B cell (primary cell): ENCODE measurements at regions of chr12 and their contacts with region 1.

Region 1: GRCh38 chr12:106357549-106358395 is at the start of gene POLR3B:
- DNase-seq: peak; percentile 98
- ATAC-seq: peak; percentile 90
- H3K4me3 ChIP-seq: peak within 1 kb of the TSS; percentile 59 to 93 (median 85)
- H3K4me3 Mint-ChIP-seq: peak within 1 kb of the TSS; percentile 98
- H3K27ac ChIP-seq: peak within 1 kb of the TSS; percentile 67 to 80
- H3K27ac Mint-ChIP-seq: peak within 1 kb of the TSS; percentile 97
- H3K4me1 ChIP-seq: peaks cover 11 to 12% of the 10 kb centered on the region in 2 donors
- H3K4me1 Mint-ChIP-seq: peaks cover 16% of the 10 kb centered on the region
- H3K27me3 ChIP-seq: no peaks in the 10 kb centered on the region
- H3K27me3 Mint-ChIP-seq: peaks cover 2% of the 10 kb centered on the region
- CTCF ChIP-seq: peak; percentile 84
- total RNA-seq, gene POLR3B: 5.9 and 9.7 TPM in 2 replicates

Region 2: GRCh38 chr12:105235732-105236476 is 1121.9 kb before region 1 on chr12 and contains the start of gene APPL2:
- CTCF ChIA-PET with region 1: interaction called, 3 read pairs
- POLR2A ChIA-PET with region 1: no interaction called
- intact Hi-C with region 1: loop called (anchors 10 kb)
- DNase-seq: peak; percentile 92
- ATAC-seq: peak; percentile 81
- H3K4me3 ChIP-seq: peak within 1 kb of the TSS; percentile 51 to 90 (median 71)
- H3K4me3 Mint-ChIP-seq: peak within 1 kb of the TSS; percentile 95
- H3K27ac ChIP-seq: peak within 1 kb of the TSS; percentile 70 to 95
- H3K27ac Mint-ChIP-seq: peak within 1 kb of the TSS; percentile 94
- H3K4me1 ChIP-seq: peaks cover 44 to 49% of the 10 kb centered on the region in 2 donors
- H3K4me1 Mint-ChIP-seq: peaks cover 38% of the 10 kb centered on the region
- H3K27me3 ChIP-seq: no peaks in the 10 kb centered on the region
- H3K27me3 Mint-ChIP-seq: no peaks in the 10 kb centered on the region
- CTCF ChIP-seq: peak; percentile 66
- total RNA-seq, gene APPL2: 57.7 and 58.3 TPM in 2 replicates

Region 3: GRCh38 chr12:105906545-105906944 is 451.2 kb before region 1 on chr12:
- CTCF ChIA-PET with region 1: no interaction called
- POLR2A ChIA-PET with region 1: no interaction called
- intact Hi-C with region 1: no loop called
- DNase-seq: no peak
- ATAC-seq: no peak
- H3K4me3 ChIP-seq: no peak overlapping the region
- H3K4me3 Mint-ChIP-seq: no peak overlapping the region
- H3K27ac ChIP-seq: no peak overlapping the region
- H3K27ac Mint-ChIP-seq: no peak overlapping the region
- H3K4me1 ChIP-seq: no peaks in the 10 kb centered on the region
- H3K4me1 Mint-ChIP-seq: no peaks in the 10 kb centered on the region
- H3K27me3 ChIP-seq: no peaks in the 10 kb centered on the region
- H3K27me3 Mint-ChIP-seq: peaks cover 4% of the 10 kb centered on the region
- CTCF ChIP-seq: no peak

Region 4: DNA sequence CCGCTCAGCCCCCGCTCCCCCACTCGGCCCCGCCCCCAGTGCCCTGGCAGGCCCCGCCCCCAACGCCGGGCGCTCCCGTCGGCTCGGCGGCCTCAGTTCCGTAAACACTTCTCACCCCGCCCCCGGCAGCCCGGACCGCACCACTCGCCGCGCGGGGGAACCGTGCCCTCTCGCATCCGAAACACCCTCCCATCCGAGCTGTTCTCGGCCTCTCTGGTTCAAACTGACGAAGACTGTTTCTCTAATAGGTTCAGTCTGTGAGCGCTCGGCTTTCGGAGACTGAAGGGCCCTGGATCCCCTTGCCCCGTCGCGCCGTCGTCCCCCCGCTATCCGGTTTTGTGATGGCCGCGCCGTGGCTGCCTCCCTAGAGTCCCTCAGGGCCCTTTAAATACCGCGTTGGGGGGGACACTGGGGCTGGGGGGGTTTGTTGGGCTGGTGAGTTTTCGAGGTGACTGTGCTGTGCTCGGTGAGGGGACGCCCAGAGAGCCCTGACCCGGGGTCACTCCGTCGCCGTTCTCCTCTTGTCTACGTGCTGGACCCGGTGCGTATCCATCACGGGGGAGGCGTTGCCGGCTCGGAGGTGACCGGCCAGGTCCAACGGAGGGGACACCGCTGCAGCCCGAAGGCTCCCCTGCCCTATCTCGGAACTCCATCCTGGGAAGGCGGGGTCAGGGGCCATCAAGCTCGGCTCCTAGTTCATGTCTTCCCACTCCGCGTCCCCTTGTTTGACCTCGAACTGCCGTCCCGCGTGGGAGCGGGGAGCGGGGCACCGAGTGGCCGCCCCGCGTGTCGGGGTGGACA is 55.2 kb before region 1 on chr12 and contains the start of gene TCP11L2:
- CTCF ChIA-PET with region 1: interaction called, 9 read pairs
- POLR2A ChIA-PET with region 1: interaction called, 20 read pairs
- intact Hi-C with region 1: loop called (anchors 1 kb)
- DNase-seq: peak; percentile 96
- ATAC-seq: peak; percentile 58
- H3K4me3 ChIP-seq: peak within 1 kb of the TSS; percentile 84 to 100 (median 99)
- H3K4me3 Mint-ChIP-seq: peak within 1 kb of the TSS; percentile 94
- H3K27ac ChIP-seq: peak within 1 kb of the TSS; percentile 98 to 99
- H3K27ac Mint-ChIP-seq: peak within 1 kb of the TSS; percentile 100
- H3K4me1 ChIP-seq: peaks cover 43 to 48% of the 10 kb centered on the region in 2 donors
- H3K4me1 Mint-ChIP-seq: peaks cover 65% of the 10 kb centered on the region
- H3K27me3 ChIP-seq: no peaks in the 10 kb centered on the region
- H3K27me3 Mint-ChIP-seq: no peaks in the 10 kb centered on the region
- CTCF ChIP-seq: no peak
- total RNA-seq, gene TCP11L2: 306 and 315 TPM in 2 replicates

Region 5: DNA sequence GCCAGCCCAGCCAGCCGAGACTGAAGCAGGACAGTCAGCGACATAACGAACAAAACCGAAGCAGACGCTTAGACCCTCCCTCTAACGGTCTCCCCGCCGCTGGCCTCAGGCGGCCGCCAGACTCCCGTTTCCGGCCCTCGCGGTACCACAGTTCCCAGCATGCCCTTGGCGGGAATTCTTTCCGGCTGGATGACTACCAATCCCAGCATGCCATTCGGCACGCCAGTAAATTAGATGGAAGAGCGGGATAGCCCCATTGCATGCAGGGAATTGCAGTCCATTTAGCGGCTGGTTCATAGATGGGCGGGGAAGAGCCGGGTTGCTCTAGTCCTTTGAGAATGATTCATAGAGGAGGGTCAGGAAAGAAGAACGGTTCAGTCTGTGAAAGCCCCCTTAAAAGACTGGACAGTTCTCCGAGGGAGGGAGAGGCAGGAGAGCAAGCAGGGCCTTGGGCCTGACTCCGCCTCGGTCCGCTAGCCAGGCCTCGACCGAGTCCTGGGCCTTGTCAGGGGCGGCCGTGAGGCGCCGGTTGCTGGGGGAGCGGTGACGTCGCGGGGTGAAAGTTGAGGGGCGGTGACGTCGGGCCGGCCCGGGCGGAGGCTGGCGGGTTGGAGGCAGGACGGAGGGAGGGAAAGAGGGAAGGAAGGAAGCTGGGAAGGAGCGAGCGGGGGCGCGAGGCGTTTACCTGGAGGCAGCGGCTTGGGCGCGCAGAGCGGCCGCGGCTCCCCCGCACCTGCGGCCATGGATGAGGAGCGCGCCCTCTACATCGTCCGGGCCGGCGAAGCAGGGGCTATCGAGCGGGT is 416.4 kb after region 1 on chr12 and contains the start of gene RIC8B:
- CTCF ChIA-PET with region 1: no interaction called
- POLR2A ChIA-PET with region 1: no interaction called
- intact Hi-C with region 1: loop called (anchors 1 kb)
- DNase-seq: peak; percentile 74
- ATAC-seq: peak; percentile 86
- H3K4me3 ChIP-seq: peak within 1 kb of the TSS; percentile 67 to 77 (median 70)
- H3K4me3 Mint-ChIP-seq: peak within 1 kb of the TSS; percentile 96
- H3K27ac ChIP-seq: peak within 1 kb of the TSS in 1 of 2 donors; percentile 69
- H3K27ac Mint-ChIP-seq: peak within 1 kb of the TSS; percentile 88
- H3K4me1 ChIP-seq: peaks cover 16 to 17% of the 10 kb centered on the region in 2 donors
- H3K4me1 Mint-ChIP-seq: peaks cover 27% of the 10 kb centered on the region
- H3K27me3 ChIP-seq: peaks cover 0 to 14% (median 2%) of the 10 kb centered on the region in 4 experiments
- H3K27me3 Mint-ChIP-seq: peaks cover 8% of the 10 kb centered on the region
- CTCF ChIP-seq: no peak
- total RNA-seq, gene RIC8B: 12.7 and 14.8 TPM in 2 replicates

Region 6: DNA sequence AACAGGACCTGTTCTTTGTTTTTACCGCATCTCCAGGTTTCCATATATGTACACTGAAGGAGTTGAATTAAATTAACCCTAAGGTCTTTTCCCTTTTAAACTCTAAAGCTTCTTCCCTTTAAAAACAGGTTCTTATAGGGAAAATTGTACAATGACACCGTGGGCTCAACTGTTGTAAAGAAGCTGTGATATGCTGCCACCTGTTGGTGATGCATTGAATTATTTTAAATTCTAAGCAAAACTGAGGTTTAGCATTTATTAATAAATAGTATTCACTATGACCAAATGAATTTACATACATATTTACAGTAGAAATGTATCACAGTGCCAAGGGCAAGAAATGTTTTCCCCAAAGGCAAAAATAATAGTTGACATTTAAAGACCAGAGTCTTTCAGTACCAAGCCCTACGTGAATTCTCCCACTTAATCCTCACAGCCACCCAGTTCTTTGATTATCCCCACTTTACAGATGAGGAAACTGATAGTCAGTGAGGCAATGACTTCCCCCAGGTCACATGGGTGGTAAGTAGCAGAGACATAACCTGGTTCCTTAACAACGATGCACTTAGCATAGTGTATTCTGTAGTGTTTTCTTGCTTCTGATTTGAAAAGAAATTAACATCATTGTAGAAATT is 562.3 kb after region 1 on chr12:
- CTCF ChIA-PET with region 1: interaction called, 39 read pairs
- POLR2A ChIA-PET with region 1: no interaction called
- intact Hi-C with region 1: loop called (anchors 1 kb)
- DNase-seq: peak; percentile 64
- ATAC-seq: no peak
- H3K4me3 ChIP-seq: no peak overlapping the region
- H3K4me3 Mint-ChIP-seq: no peak overlapping the region
- H3K27ac ChIP-seq: no peak overlapping the region
- H3K27ac Mint-ChIP-seq: no peak overlapping the region
- H3K4me1 ChIP-seq: peaks cover 0 to 18% of the 10 kb centered on the region in 2 donors
- H3K4me1 Mint-ChIP-seq: no peaks in the 10 kb centered on the region
- H3K27me3 ChIP-seq: peaks cover 11 to 82% (median 72%) of the 10 kb centered on the region in 4 experiments
- H3K27me3 Mint-ChIP-seq: peaks cover 84% of the 10 kb centered on the region
- CTCF ChIP-seq: peak; percentile 96

Region 7: DNA sequence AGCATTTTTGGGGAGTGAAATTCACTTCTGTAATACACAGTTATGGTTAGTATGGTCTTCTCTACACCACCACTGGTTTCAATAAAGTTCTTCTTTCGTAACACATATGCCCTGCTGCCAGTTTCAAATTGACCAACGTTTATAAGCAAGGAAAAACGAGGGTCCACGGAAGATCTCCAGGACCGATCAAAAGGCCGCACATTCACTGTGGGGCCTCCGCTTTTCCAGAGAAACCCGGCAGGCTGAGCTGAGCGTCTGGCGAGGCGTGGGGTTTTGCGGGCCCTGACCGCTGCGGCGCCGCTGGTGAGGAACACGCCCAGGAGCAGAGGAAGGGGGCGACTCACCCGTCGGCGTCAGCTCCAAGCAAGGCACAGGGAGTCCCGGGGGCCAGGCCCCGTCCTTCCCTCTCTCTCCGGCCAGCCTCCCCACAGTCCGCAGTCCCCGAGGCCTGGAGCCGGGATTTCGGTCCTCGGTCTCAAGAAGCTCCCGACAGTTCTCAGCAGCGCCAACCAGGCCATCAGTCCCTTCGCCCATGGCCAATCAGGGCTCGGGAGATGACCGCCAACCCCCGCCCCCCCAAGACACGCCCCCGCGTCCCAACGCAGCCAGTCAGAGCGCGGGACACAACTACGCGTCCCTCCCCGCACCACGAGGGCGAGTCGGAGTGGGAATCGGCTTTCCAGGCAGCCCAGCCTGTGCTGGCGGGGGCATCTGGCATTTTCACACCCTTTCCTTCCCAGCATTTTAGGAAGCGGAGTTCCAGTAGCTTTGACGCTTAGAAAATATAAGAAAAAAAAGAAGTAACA is 629.1 kb after region 1 on chr12 and contains the start of gene MTERF2:
- CTCF ChIA-PET with region 1: no interaction called
- POLR2A ChIA-PET with region 1: interaction called, 4 read pairs
- intact Hi-C with region 1: loop called (anchors 1 kb)
- DNase-seq: peak; percentile 85
- ATAC-seq: peak; percentile 98
- H3K4me3 ChIP-seq: peak within 1 kb of the TSS; percentile 80 to 91 (median 85)
- H3K4me3 Mint-ChIP-seq: peak within 1 kb of the TSS; percentile 95
- H3K27ac ChIP-seq: peak within 1 kb of the TSS; percentile 5 to 28
- H3K27ac Mint-ChIP-seq: peak within 1 kb of the TSS; percentile 77
- H3K4me1 ChIP-seq: peaks cover 13 to 16% of the 10 kb centered on the region in 2 donors
- H3K4me1 Mint-ChIP-seq: peaks cover 28% of the 10 kb centered on the region
- H3K27me3 ChIP-seq: no peaks in the 10 kb centered on the region
- H3K27me3 Mint-ChIP-seq: no peaks in the 10 kb centered on the region
- CTCF ChIP-seq: no peak
- total RNA-seq, gene MTERF2: 7.1 and 9.4 TPM in 2 replicates